Activated CD8-positive, alpha-beta T cell treated with anti-CD3 and anti-CD28 coated beads, Interleukin-2, amount 10 ng/mL, durations not matched to agents 7 days and 5 days (primary cell): ENCODE measurements at regions of chr9 and their contacts with region 1.

Region 1: DNA sequence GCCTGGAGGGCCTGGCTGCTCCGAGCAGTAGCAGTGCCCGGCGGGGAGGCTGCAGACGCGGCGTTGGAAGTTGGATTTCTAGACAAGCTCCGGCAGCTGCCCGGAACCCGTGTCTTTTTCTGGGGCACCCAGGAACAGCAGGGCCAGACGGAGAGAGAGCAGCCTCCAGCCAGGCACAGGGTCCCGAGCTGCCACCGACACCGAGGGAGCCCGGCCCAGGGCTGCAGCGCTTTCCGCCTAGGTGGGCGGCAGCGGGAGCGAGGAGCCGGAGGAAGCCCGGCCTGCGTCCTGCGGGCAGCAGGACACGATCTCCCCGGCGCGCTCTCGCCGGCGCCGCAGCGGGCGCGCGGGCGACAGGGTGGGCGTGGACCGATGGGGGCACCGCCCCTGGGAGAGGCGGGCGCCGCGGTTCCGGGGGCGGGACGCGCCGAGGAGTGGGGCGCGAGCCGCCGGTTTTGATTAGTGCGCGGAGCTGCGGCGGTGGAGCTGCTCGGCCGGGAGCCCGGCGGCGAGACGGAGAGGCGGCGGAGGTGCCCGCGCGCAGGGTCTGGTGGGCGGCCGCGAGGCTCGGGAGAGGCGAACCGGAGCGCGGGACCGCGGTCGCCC is at the start of gene UGCG:
- DNase-seq: peak; percentile 88
- ATAC-seq: peak; percentile 90
- H3K4me3 Mint-ChIP-seq: peak within 1 kb of the TSS; percentile 85
- H3K27ac Mint-ChIP-seq: peak within 1 kb of the TSS; percentile 89
- H3K4me1 Mint-ChIP-seq: peaks cover 18% of the 10 kb centered on the region
- H3K27me3 Mint-ChIP-seq: peaks cover 2% of the 10 kb centered on the region
- total RNA-seq, gene UGCG: 24.6 to 25.4 TPM

Region 2: DNA sequence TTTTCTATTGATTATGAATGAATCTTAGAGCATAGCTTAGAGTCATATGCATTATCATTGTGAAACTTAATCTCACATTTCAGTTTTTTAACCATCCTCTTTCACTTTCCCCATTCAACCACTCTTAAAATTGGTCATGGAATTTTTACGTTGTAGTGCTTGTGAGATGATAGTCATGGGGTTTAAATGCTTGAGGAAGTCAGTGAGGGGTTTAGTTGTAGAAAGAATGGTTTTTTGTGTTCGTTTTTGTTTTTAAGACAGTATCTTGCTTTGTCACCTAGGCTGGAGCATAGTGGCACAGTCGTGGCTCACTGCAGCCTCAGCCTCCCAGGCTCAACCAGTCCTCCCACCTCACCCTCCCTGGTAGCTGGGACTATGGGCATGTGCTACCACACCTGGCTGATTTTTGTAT is 19.8 kb after region 1 on chr9:
- CTCF ChIA-PET with region 1: interaction called, 6 read pairs
- POLR2A ChIA-PET with region 1: interaction called, 16 read pairs
- DNase-seq: no peak
- ATAC-seq: peak; percentile 72
- H3K4me3 Mint-ChIP-seq: peak overlapping the region; percentile 4
- H3K27ac Mint-ChIP-seq: peak overlapping the region; percentile 23
- H3K4me1 Mint-ChIP-seq: peaks cover 42% of the 10 kb centered on the region
- H3K27me3 Mint-ChIP-seq: no peaks in the 10 kb centered on the region

Region 3: DNA sequence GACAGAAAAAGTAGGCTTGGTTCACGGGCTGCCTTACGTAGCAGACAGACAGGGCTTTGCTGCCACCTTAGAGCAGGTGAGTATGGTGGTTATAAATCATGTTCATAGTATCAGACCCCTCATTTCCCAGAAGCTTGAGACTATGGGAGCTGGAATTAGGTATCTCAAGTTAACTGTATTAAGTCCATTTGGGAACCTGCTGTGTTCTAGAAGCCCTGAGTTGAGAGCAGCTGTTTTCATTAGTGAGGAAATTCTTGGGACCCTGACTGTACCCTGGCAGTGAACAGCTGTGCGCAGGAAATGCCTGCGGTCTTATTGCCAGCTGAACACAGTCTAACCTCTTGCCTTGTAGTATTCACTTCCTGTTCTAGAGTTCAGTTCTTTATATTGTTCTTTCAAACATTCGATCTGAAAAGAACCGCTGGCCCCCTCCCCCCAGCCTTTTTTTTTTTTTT is 30.0 kb after region 1 on chr9:
- CTCF ChIA-PET with region 1: interaction called, 5 read pairs
- POLR2A ChIA-PET with region 1: interaction called, 10 read pairs
- DNase-seq: peak; percentile 75
- ATAC-seq: peak; percentile 97
- H3K4me3 Mint-ChIP-seq: no peak overlapping the region
- H3K27ac Mint-ChIP-seq: peak overlapping the region; percentile 85
- H3K4me1 Mint-ChIP-seq: peaks cover 33% of the 10 kb centered on the region
- H3K27me3 Mint-ChIP-seq: no peaks in the 10 kb centered on the region

Region 4: DNA sequence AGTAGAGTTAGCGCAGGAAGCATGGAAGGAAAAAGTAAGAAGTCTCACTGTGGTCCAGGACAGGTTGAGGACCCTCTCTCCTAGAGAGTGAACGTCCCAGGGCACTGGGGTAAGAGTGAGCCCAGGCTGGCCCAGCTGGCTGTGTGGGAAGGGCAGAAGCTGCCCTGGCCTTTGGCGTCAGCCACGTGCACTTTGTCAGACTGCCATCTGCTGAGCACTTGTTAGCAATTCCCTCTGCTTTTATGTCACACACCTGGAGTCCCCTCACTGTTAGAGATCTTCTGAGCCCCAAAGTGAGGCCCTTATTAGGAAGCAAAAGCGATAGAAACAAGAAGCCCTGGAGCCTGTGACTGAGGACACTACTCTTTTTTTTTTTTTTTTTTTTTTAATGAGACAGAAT is 79.3 kb after region 1 on chr9:
- CTCF ChIA-PET with region 1: no interaction called
- POLR2A ChIA-PET with region 1: no interaction called
- DNase-seq: no peak
- ATAC-seq: peak; percentile 51
- H3K4me3 Mint-ChIP-seq: no peak overlapping the region
- H3K27ac Mint-ChIP-seq: no peak overlapping the region
- H3K4me1 Mint-ChIP-seq: peaks cover 5% of the 10 kb centered on the region
- H3K27me3 Mint-ChIP-seq: peaks cover 4% of the 10 kb centered on the region